ENCODE measurements at regions of chr11 and their contacts with region 1.

Region 1: DNA sequence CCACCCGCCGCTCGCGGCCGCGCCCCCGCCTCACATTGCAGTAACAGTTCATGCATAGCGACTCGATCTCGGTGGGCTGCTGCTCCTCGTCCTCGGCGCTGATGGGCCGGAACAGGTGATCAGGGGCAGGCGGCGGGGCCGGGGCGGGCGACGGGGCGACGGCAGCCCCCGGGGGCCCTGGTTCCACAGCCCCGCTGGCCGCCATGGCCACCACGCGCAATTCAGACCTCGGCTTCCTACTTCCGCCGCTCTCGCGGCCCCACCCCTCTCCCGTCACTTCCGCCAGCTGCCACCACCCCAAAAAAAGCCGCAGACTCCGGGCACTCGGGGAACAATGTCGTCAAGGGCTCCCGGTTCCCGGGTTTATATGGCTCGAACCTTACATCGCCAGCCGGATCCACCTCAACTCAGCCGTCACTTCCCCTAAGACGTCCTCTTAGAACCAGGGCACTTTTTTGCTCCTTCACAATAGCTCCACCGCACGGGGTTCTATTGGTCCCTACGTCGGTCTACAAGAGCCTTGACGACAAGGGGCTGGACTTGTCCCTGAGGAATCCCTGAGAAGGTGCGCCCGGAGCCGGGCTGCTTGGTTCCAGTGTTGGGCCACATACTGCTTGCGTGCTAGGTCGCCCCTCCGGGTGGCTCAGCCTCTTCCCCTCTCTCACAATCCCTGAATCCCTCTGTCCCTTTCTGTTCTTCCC is at the start of gene ZPR1:
- DNase-seq: peak; percentile 90
- ATAC-seq: peak; percentile 76
- H3K4me3 Mint-ChIP-seq: peak within 1 kb of the TSS; percentile 96
- H3K27ac Mint-ChIP-seq: peak within 1 kb of the TSS; percentile 88
- H3K4me1 Mint-ChIP-seq: peaks cover 52% of the 10 kb centered on the region
- H3K27me3 Mint-ChIP-seq: no peaks in the 10 kb centered on the region
- total RNA-seq, gene ZPR1: 88.8 to 106 TPM

Region 2: DNA sequence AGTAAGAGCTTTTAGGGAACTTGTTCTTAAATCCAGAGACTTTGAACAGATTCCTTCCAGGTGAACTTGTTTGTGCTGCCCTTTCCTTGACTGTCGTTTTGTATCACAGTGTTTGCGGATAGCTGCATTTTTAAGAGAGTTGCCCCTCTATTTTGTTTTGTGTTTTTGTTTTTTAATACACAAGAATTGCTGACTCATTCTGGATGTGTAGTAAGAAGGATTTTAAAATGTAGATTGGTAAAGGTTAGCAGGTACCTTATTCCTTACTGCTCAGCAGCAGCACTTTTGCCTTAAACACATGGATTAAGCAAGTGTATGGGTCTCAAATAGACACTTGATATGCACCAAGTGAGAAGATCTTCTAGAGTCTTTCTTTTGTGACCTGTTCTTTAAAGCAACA is 12.7 kb after region 1 on chr11:
- CTCF ChIA-PET with region 1: interaction called, 10 read pairs
- POLR2A ChIA-PET with region 1: no interaction called
- intact Hi-C with region 1: no loop called
- DNase-seq: no peak
- ATAC-seq: no peak
- H3K4me3 Mint-ChIP-seq: no peak overlapping the region
- H3K27ac Mint-ChIP-seq: no peak overlapping the region
- H3K4me1 Mint-ChIP-seq: peaks cover 3% of the 10 kb centered on the region
- H3K27me3 Mint-ChIP-seq: peaks cover 7% of the 10 kb centered on the region

Region 3: DNA sequence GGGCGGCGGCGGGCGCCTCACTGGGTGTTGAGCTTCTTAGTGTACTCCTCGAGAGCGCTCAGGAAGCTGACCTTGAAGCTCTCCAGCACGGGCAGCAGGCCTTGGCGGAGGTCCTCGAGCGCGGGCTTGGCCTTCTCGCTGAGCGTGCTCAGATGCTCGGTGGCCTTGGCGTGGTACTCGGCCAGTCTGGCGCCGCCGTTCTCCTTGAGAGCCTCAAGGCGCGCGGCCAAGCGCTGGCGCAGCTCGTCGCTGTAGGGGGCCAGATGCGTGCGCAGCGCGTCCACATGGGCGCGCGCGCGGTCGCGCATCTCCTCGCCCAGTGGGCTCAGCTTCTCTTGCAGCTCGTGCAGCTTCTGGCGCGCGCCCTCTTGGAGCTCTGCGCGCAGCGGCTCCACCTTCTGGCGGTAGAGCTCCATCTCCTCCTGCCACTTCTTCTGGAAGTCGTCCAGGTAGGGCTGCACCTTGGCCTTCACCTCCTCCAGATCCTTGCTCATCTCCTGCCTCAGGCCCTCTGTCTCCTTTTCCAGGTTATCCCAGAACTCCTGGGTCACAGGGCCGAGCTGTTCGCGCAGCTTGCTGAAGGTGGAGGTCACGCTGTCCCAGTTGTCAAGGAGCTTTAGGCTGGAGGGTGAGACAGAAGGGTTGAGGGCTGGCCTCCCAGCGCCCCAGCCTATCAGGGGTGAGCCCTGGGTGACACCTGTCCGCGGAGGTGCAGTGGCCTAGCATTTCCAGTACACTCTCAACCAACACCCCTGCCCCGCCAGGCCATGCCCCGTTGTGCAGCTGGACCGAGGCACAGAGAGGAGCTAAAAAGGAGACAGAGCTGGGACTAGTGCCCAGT is 48.1 kb after region 1 on chr11:
- CTCF ChIA-PET with region 1: interaction called, 89 read pairs
- POLR2A ChIA-PET with region 1: interaction called, 5 read pairs
- intact Hi-C with region 1: loop called (anchors 1 kb)
- DNase-seq: peak; percentile 90
- ATAC-seq: peak; percentile 95
- H3K4me3 Mint-ChIP-seq: peak overlapping the region; percentile 59
- H3K27ac Mint-ChIP-seq: peak overlapping the region; percentile 31
- H3K4me1 Mint-ChIP-seq: peaks cover 11% of the 10 kb centered on the region
- H3K27me3 Mint-ChIP-seq: peaks cover 3% of the 10 kb centered on the region

Region 4: GRCh38 chr11:117098269-117099232 is 310.6 kb after region 1 on chr11 and contains the start of gene SIK3:
- CTCF ChIA-PET with region 1: interaction called, 72 read pairs
- POLR2A ChIA-PET with region 1: no interaction called
- intact Hi-C with region 1: loop called in 1 of 2 experiments (anchors 1 kb)
- DNase-seq: peak; percentile 96
- ATAC-seq: peak; percentile 71
- H3K4me3 Mint-ChIP-seq: peak within 1 kb of the TSS; percentile 93
- H3K27ac Mint-ChIP-seq: peak within 1 kb of the TSS; percentile 93
- H3K4me1 Mint-ChIP-seq: peaks cover 46% of the 10 kb centered on the region
- H3K27me3 Mint-ChIP-seq: no peaks in the 10 kb centered on the region
- total RNA-seq, gene SIK3: 23.6 to 25.3 TPM

Region 5: DNA sequence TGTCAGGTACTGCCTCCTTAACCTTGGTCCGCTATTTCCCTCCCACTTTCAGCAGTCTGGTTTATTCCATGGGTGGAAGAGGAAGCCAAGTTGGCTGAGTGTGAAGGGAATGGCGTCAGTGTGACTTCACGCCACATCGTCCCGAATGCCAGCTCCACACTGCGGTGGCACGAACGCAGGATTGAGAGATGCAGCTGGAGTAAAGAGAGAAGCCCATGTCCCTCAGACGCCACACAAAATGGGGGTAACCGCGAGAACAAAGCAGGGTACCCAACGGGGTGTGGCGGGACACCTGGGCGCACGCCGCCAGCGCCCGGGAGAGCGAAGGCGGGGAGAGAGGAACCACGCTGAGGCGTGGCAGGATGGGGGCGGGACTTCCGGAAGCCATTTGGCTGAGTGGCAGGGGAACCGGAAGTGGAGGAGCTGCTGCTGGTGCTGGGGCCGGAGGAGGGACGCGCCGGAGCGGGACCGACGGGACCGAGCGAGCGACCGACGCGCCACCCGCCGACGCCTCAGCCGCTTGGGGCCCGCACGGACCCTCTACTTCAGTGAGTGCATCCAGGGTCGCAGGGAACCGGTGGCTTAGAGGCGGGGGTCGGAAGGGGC is 356.0 kb after region 1 on chr11 and contains the start of gene PAFAH1B2:
- CTCF ChIA-PET with region 1: interaction called, 5 read pairs
- POLR2A ChIA-PET with region 1: no interaction called
- intact Hi-C with region 1: loop called in 1 of 2 experiments (anchors 1 kb)
- DNase-seq: peak; percentile 98
- ATAC-seq: peak; percentile 93
- H3K4me3 Mint-ChIP-seq: peak within 1 kb of the TSS; percentile 99
- H3K27ac Mint-ChIP-seq: peak within 1 kb of the TSS; percentile 94
- H3K4me1 Mint-ChIP-seq: peaks cover 42% of the 10 kb centered on the region
- H3K27me3 Mint-ChIP-seq: peaks cover 3% of the 10 kb centered on the region
- total RNA-seq, gene PAFAH1B2: 44.8 to 57.5 TPM

Measured in activated CD4-positive, alpha-beta T cell treated with anti-CD3 and anti-CD28 coated beads for 36 hours (primary cell).